ENCODE measurements at regions of chrX and their contacts with region 1.

Region 1: GRCh38 chrX:136711147-136711546 is 63.2 kb downstream of the CD40LG start:
- DNase-seq: peak; percentile 69
- H3K4me3 Mint-ChIP-seq: peak overlapping the region; percentile 6
- H3K27ac Mint-ChIP-seq: peak overlapping the region; percentile 86
- H3K4me1 Mint-ChIP-seq: peaks cover 31% of the 10 kb centered on the region
- H3K27me3 Mint-ChIP-seq: no peaks in the 10 kb centered on the region

Region 2: DNA sequence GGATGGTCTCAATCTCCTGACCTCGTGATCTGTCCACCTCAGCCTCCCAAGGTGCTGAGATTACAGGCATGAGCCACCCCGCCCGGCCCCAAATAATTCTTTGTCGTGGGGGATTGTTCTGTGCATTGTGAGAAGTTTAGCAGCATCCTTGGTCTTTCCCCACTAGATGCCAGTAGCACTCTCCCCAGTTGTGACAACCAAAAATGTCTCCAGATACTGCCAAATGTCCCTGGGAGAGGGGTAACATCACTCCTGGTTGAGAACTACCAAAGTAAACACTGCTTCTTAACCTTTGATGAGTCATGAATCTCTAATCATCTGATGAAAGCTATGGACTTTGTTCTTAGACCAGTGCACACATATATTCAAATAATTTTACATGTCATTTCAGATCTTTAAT is 314.1 kb before region 1 on chrX:
- intact Hi-C with region 1: loop called (anchors 10 kb)
- DNase-seq: no peak
- H3K4me3 Mint-ChIP-seq: no peak overlapping the region
- H3K27ac Mint-ChIP-seq: no peak overlapping the region
- H3K4me1 Mint-ChIP-seq: no peaks in the 10 kb centered on the region
- H3K27me3 Mint-ChIP-seq: peaks cover 2% of the 10 kb centered on the region

Region 3: DNA sequence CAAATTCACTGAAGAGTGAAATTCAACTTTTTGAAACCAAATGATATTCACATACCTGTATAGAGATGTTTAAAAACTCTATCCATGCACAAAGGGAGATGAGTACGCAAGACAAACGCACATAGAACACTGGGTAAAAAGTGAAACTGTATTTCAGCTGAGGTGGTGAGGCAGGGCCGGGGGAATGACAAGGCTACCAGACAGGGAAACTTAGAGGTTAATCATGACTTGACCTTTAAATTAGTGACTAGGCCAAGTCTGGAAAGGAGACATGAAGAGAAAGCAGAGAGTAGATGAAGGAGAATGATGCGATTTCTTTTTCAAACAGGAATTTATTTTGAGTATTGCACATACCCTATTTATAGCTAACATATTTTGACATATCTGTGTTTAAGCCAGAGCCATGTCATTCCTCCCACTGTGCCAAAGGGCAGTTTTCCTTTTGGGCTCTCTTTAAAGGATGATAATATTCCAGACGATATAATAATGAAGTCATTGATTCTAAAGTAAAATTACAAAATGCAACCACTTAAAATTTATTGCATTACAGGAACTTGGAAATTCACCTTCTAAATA is 20.1 kb after region 1 on chrX:
- intact Hi-C with region 1: loop called (anchors 2 kb)
- DNase-seq: no peak
- H3K4me3 Mint-ChIP-seq: peak overlapping the region; percentile 70
- H3K27ac Mint-ChIP-seq: peak overlapping the region; percentile 55
- H3K4me1 Mint-ChIP-seq: peaks cover 43% of the 10 kb centered on the region
- H3K27me3 Mint-ChIP-seq: no peaks in the 10 kb centered on the region

Region 4: GRCh38 chrX:136767104-136767941 is 56.2 kb after region 1 on chrX:
- intact Hi-C with region 1: loop called (anchors 2 kb)
- DNase-seq: peak; percentile 81
- H3K4me3 Mint-ChIP-seq: peak overlapping the region; percentile 83
- H3K27ac Mint-ChIP-seq: peak overlapping the region; percentile 95
- H3K4me1 Mint-ChIP-seq: peaks cover 50% of the 10 kb centered on the region
- H3K27me3 Mint-ChIP-seq: no peaks in the 10 kb centered on the region

Region 5: GRCh38 chrX:136866337-136867095 is 155.4 kb after region 1 on chrX:
- intact Hi-C with region 1: loop called (anchors 2 kb)
- DNase-seq: no peak
- H3K4me3 Mint-ChIP-seq: no peak overlapping the region
- H3K27ac Mint-ChIP-seq: peak overlapping the region; percentile 77
- H3K4me1 Mint-ChIP-seq: peaks cover 13% of the 10 kb centered on the region
- H3K27me3 Mint-ChIP-seq: no peaks in the 10 kb centered on the region

Region 6: GRCh38 chrX:136911253-136911652 is 200.1 kb after region 1 on chrX:
- intact Hi-C with region 1: no loop called
- DNase-seq: no peak
- H3K4me3 Mint-ChIP-seq: peak overlapping the region; percentile 47
- H3K27ac Mint-ChIP-seq: peak overlapping the region; percentile 25
- H3K4me1 Mint-ChIP-seq: peaks cover 13% of the 10 kb centered on the region
- H3K27me3 Mint-ChIP-seq: no peaks in the 10 kb centered on the region

Region 7: DNA sequence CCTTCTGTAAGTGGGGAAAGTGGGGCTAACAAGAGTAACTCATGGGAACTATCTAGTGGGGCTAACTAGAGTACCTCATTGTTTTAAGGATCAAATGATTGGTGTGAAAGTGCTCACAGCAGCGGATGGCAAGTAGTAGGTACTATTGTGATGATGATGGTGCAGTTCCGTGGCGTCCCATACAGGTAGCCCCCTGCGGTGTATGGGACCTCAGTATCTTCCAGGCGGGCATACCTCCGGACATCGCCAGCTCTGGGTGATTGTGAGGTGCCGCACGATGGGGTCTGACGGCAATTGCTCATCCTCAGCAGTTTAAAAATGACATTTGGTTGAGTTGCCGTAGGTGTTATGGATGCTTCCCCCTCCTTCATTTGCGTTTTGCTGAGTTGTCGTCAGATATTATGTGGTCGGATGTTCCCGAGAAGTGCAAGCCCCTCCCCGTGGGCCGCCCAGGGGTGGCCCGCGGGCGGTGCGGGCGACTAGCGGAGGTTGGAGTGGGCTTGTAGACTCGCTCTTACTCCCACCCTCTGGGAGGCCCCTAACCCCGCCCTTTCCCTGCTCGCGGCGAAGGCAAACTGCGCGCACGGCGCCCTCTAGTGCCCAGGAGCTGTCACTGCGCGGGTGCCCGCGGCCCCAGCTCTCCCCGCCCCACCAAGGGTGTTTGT is 341.0 kb after region 1 on chrX:
- intact Hi-C with region 1: loop called (anchors 10 kb)
- DNase-seq: peak; percentile 94
- H3K4me3 Mint-ChIP-seq: peak overlapping the region; percentile 86
- H3K27ac Mint-ChIP-seq: peak overlapping the region; percentile 84
- H3K4me1 Mint-ChIP-seq: peaks cover 8% of the 10 kb centered on the region
- H3K27me3 Mint-ChIP-seq: peaks cover 47% of the 10 kb centered on the region

Measured in activated CD4-positive, alpha-beta T cell treated with anti-CD3 and anti-CD28 coated beads, Interleukin-2, amount 10 ng/mL, durations not matched to agents 24 days and 14 days (primary cell).